Posterior cingulate gyrus (tissue), 11 donors: ENCODE measurements at regions of chr11 and their contacts with region 1.

Region 1: DNA sequence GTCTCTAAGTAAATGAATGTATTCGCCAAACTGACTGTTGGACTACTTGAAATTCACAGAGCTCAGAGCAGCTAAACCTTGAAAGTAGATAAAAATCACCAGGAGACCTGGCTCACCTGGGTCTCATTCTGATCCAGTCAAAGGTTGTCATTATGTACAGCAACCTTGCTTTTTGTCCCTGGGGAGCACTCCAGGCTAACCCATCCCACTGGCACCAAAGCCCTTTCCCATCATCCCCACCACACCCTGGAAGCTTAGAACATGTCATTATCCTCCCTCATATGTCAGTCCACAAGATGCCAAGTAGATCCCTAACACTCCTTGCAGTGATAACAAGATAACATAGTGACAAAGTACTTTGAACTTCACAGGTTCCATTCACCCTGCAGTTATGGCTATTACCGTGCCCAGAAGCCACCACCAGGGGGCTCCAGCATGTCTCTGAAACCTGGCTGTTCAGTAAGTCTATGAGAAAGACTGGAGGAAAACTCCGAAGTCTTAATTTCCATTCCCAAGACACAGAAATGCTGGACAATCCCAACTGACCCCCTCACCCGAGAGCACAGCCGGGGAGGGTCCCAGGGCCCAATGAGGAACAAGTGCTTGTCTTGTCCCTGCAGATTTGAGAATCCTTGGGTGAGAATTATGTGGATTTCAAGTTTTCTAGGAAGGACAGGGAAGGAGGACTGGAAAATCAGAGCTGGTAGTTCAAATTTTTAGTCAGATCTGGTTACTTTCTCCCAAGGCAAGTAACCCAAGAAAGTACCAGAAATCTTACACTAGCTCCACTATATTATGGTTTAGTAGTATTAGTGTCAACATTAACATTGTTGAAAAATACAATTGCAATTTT is 43.0 kb upstream of the USP47 start:
- DNase-seq: peak in 9 of 10 donors; percentile 39 to 97 (median 91)

Region 2: GRCh38 chr11:11243590-11244469 is 555.0 kb before region 1 on chr11:
- intact Hi-C with region 1: no loop called
- DNase-seq: no peak

Region 3: GRCh38 chr11:11848891-11849746 is 50.3 kb after region 1 on chr11:
- intact Hi-C with region 1: loop called (anchors 2 kb)
- DNase-seq: peak in 6 of 10 donors; percentile 16 to 87 (median 32)

Region 4: DNA sequence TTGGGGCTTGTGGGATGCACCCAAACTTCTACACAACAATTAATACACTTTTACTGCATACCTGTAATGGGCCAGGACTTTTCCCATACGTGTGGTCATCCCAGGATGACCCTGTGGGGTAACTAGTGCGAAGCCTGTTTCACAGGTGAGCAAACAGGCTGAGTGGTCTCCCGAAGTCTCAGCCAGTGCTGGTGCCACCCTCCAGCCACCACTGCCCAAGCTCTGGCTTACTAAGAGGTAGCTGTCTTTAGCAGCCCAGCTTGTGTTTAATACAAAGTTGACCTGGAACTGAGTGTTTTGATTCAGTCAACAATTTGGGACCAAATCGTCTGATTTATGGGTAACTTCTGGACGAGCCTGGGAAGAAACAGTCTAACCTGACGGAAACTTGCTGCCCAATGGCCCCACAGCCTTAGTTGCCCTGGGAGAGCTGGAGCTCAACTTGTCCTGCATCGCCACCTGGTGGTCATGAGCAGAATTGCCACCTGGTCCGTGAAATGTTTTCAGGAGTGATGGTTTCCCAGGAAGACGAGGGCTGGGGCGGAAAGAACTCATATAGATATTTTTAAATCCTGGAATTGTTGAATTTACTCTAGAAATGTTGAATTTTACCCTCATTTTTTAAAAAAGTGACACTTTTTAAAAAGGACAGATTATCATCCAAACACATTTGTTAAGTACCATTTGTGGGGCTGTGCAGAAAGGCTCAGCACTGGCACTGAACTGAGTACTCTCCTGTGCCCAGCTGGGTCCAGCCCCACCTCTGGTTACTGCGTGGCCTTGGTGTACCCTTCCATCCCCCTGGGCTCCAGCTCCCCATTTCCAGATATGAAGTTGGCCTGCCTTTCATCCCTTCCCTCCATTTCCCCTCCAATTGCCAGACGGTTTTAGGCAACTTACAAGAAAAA is 483.0 kb after region 1 on chr11:
- intact Hi-C with region 1: loop called (anchors 5 kb)
- DNase-seq: peak; percentile 83 to 98 (median 92)